A549 (cell line): ENCODE measurements at regions of chr2 and their contacts with region 1.

Region 1: DNA sequence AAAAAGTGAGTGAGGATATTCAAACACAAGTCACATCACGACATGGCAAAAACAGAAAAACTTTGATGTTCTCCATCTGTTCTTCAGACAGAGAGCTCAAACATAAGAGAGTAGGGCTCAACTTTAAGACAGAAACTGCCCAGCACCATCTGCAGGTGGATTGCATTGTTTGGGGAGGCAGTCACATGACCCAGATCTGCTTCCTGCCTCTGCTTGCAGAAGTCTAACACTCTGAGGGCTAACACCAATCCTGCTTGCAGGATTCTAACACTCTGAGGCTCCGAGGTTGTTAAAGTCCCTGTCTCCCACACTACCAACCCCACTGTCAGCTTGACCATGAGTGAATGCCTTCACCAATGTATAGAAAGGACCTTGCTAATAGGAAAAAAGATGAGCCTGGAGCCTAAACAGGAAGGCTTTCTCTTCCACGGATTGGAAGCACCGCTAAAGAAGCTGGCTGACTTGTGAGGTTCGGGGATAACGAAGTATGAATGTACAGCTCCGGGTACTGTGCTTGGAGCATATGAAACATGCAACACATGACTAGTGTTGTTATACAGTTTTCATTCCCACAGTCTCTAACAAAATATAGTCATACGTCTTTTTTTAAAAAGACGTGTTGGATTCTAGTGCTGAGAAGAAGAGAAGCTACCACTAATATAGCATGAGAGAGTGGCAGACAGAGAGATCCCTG is 176.6 kb upstream of the CREB1 start:
- DNase-seq: no peak
- ATAC-seq: peak; percentile 34 to 61; a peak in 4 of 6 replicates
- H3K4me3 ChIP-seq: no peak overlapping the region
- H3K27ac ChIP-seq: peak overlapping the region in 1 of 2 experiments; percentile 15; a peak in 1 of 6 replicates
- H3K4me1 ChIP-seq: 0 out of 3 replicates have a peak, but pooled peaks cover 3% of the 10 kb centered on the region
- CTCF ChIP-seq: no peak
- EP300 ChIP-seq: no peak
- POLR2A ChIP-seq: no peak
- RAD21 ChIP-seq: no peak

Region 2: DNA sequence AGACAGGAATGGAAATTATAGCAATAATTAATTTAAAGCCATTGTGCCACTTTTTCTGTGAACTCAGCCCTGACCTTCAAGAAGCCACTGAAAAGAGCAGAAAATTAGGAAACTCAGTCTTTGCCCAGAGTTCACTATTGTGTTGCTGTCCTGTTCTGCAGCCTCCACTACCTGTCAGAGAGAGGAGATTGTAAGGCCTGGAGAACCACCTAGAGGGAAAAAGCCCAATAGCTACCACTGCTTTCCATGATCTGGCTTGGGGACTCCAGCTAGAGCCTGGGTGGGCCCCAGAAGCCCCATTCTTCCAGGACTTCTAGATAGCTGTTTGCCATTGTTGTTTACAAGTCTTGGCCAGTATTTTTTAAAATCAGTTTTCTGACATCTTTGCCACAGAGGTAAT is 11.3 kb before region 1 on chr2:
- CTCF ChIA-PET with region 1: interaction called, 11 read pairs
- POLR2A ChIA-PET with region 1: no interaction called
- DNase-seq: no peak
- ATAC-seq: peak in 1 of 2 experiments; percentile 71; a peak in 3 of 6 replicates
- H3K4me3 ChIP-seq: no peak overlapping the region
- H3K27ac ChIP-seq: no peak overlapping the region
- H3K4me1 ChIP-seq: peaks cover 17% of the 10 kb centered on the region
- CTCF ChIP-seq: peak; percentile 12; the same call in 1 of the 3 replicates
- EP300 ChIP-seq: no peak
- POLR2A ChIP-seq: no peak
- RAD21 ChIP-seq: peak; percentile 38 to 42